ENCODE measurements at regions of chr12 and their contacts with region 1.

Region 1: GRCh38 chr12:50387487-50388478 is 8.6 kb downstream of the FAM186A start:
- DNase-seq: no peak
- H3K4me3 ChIP-seq: no peak overlapping the region
- H3K27ac ChIP-seq: no peak overlapping the region
- H3K27me3 ChIP-seq: no peaks in the 10 kb centered on the region
- CTCF ChIP-seq: no peak

Region 2: DNA sequence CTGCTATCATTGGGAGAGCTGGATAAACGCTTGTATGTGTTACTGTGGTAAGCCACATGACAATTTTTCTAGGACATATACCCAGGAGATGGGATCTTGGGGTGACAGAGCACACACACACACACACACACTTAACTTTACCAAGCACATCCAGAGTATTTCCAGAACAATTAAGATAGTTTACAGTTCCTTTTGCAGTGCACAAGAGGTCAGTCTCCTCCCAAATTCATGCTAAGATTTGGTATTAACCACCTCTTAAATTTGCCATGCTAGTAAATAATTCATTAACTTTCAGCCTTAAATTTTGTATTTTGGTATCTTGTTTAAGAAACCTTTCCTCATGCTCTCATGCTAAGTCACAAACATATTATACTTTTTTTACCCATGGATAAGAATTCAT is 70.6 kb before region 1 on chr12:
- in situ Hi-C with region 1: no loop called
- DNase-seq: no peak
- H3K4me3 ChIP-seq: no peak overlapping the region
- H3K27ac ChIP-seq: no peak overlapping the region
- H3K27me3 ChIP-seq: no peaks in the 10 kb centered on the region
- CTCF ChIP-seq: no peak

Region 3: DNA sequence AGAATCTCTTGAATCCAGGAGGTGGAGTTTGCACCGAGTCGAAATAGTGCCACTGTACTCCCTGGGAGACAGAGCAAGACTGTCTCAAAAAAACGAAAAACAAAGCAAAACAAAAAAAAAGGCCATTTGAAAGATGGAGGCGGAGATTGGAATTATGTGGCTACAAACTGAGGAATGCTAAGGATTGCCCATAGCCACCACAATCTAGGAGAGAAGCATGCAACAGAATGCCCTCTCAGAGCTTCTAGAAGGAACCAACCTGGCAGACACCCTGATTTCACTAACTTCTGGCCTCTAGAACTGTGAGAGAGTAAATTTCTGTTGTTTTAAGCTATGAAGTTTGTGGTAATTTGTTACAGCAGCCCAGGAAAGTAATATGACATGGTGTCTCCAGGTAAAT is 54.3 kb before region 1 on chr12:
- in situ Hi-C with region 1: loop called (anchors 10 kb)
- DNase-seq: no peak
- H3K4me3 ChIP-seq: no peak overlapping the region
- H3K27ac ChIP-seq: no peak overlapping the region
- H3K27me3 ChIP-seq: no peaks in the 10 kb centered on the region
- CTCF ChIP-seq: no peak

Region 4: GRCh38 chr12:50458606-50459005 is 70.8 kb after region 1 on chr12:
- in situ Hi-C with region 1: no loop called
- DNase-seq: no peak
- H3K4me3 ChIP-seq: no peak overlapping the region
- H3K27ac ChIP-seq: no peak overlapping the region
- H3K27me3 ChIP-seq: no peaks in the 10 kb centered on the region
- CTCF ChIP-seq: no peak

Measured in brain microvascular endothelial cell (primary cell).